ENCODE measurements at regions of chr1 and their contacts with region 1.

Region 1: DNA sequence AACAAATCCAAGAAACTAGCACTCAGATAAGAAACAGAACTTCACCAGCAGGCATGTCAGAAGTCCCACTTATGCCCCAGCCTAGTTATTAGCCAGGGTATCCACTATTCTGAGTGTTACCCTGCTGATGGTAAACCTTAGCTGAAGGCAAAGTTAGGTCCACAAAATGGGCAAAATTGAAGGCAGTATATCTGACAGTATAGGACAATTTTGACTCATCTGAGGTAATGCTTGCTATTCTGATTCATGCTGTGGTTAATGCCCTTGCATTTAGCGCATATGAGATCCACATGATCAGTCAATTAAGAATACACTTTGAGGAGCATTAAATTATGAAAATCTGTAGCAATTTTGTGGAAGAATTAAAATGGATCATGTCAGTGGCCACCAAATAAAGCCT is 15.1 kb downstream of the IFI44 start:
- DNase-seq: no peak
- H3K4me3 Mint-ChIP-seq: no peak overlapping the region
- H3K27ac Mint-ChIP-seq: no peak overlapping the region
- H3K4me1 Mint-ChIP-seq: peaks cover 2% of the 10 kb centered on the region
- H3K27me3 Mint-ChIP-seq: no peaks in the 10 kb centered on the region

Region 2: DNA sequence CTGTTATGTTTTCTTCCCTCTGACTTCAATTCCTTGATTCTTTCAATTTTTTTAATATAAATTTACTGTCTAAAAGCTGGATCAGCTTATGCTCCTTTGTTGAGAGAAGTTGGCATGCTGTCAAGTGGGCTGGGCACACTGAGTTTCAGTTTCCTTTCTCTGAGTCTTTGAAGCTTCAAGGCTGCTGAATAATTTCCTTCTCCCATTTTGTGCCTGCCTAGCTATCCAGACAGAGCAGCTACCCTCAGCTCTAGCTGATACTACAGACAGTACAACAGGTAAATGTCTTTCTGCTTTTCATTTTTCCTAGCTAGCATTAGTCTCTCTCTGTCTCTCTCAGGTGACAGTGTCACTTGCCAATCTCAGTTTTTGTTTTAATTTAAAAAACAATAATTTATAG is 15.1 kb before region 1 on chr1 and contains the start of gene IFI44:
- intact Hi-C with region 1: loop called (anchors 2 kb)
- DNase-seq: peak; percentile 40
- H3K4me3 Mint-ChIP-seq: peak within 1 kb of the TSS; percentile 89
- H3K27ac Mint-ChIP-seq: peak within 1 kb of the TSS; percentile 88
- H3K4me1 Mint-ChIP-seq: peaks cover 59% of the 10 kb centered on the region
- H3K27me3 Mint-ChIP-seq: no peaks in the 10 kb centered on the region
- total RNA-seq, gene IFI44: 14.4 and 16.0 TPM in 2 replicates

Measured in activated T-helper 2 cell treated with anti-CD3 and anti-CD28 coated beads, Interferon-gamma antibody, Interleukin-2, Interleukin-4, amounts not matched to agents 10 μg/mL and 5 μg/mL and 100 μg/mL, durations not matched to agents 14 hours and 24 hours and 36 hours (primary cell).